Right ventricle myocardium superior (tissue), 1 donor: ENCODE measurements at regions of chr4 and their contacts with region 1.

Region 1: DNA sequence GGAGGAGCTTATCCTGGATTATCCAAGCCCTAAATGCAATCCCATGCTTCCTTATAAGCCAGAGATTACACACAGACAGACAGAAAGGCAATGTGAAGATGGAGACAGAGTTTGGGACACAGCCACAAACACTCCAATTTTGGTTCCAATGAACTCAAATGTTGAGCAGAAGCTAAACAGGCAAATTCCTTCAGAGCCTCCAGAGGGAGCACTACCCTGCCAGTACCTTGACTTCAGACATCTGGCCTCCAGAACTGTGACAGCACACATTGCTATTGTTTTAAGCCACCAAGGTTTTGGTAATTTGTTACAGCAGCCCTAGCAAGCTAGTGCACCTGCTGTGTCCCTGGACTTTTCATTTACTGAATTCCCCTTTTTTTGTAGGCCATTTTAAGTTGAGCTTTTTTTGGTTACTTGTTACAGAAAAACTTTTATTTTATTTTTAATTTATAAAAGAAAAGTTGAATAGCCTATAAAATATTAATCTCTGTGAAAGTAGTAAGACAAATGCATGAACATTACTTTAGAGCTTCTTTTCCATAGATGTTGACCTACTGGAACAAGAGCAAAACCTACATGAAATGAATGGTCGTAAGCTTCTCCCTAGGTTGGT is 33.4 kb upstream of the SRD5A3 start:
- DNase-seq: no peak
- ATAC-seq: peak; percentile 93

Region 2: DNA sequence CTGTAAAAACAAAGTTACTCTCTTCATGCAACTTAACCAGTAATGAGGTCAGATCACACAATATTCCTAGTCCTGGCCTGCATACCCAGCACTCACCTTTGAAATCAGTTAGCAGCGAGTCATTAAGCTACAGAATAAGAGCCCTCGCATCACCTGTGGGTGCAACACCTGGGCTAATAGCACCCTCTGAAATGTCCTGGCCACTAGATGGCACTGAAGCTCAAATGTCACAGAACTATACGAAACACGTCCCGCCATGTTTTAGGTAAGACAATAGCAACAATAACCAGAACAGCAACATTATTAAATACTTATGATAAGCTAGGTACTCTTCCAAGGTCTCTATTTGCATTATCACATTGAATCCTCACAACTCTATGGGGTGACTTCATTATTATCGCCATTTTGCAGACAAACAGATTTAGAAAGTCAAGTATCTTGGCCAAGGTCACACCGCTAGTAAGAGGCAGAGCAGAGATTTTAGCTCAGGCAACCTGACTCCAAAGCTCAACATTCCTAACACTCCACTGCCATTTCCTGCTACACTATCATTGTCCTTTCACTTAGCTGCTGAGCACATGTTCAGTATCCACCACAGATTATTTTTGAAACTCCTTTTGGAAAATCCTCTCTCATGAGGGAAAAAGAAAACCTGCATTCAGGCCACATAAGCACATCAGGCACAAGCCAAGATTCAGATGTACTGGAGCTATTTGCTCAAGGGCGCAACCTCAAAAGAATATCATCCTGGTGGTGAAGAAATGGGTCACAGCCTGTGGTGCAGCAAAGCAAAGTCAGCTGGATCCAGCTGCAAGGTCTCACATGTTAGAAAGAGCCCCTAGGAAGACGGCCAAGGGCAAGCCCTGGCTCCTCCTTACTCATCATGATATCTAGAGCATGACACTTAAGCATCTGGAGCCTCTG is 127.7 kb before region 1 on chr4:
- intact Hi-C with region 1: loop called (anchors 10 kb)
- DNase-seq: no peak
- ATAC-seq: peak; percentile 59

Region 3: DNA sequence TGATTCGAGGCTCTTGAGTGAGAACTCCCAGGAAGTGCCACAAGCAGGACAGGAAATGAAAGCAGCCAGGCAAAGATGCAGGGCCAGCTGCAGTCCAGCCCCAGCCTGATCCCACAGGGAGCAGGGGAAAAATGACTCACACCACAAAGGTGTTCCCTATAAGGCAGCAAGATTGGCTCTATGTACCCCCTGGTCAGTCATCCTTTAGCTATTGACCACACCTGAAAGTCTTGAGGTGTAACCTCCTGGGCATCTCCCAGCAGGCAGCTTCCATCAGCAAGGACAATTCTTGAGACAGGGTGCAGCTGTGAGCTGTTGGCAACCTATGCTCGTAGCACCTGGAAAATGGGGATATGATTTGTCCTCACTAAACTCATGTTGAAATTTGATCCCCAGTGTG is 479.1 kb after region 1 on chr4:
- intact Hi-C with region 1: no loop called
- DNase-seq: no peak
- ATAC-seq: no peak